T-cell (primary cell): ENCODE measurements at regions of chr18 and their contacts with region 1.

Region 1: GRCh38 chr18:74316259-74317170 is 876 bp downstream of the C18orf63 start:
- DNase-seq: no peak
- ATAC-seq: no peak
- H3K4me3 ChIP-seq: no peak overlapping the region
- H3K4me3 Mint-ChIP-seq: no peak overlapping the region
- H3K27ac ChIP-seq: no peak overlapping the region
- H3K27ac Mint-ChIP-seq: no peak overlapping the region
- H3K4me1 ChIP-seq: no peaks in the 10 kb centered on the region
- H3K4me1 Mint-ChIP-seq: no peaks in the 10 kb centered on the region
- H3K27me3 ChIP-seq: peaks cover 0 to 17% of the 10 kb centered on the region in 2 experiments
- H3K27me3 Mint-ChIP-seq: peaks cover 5 to 11% of the 10 kb centered on the region in 2 donors

Region 2: DNA sequence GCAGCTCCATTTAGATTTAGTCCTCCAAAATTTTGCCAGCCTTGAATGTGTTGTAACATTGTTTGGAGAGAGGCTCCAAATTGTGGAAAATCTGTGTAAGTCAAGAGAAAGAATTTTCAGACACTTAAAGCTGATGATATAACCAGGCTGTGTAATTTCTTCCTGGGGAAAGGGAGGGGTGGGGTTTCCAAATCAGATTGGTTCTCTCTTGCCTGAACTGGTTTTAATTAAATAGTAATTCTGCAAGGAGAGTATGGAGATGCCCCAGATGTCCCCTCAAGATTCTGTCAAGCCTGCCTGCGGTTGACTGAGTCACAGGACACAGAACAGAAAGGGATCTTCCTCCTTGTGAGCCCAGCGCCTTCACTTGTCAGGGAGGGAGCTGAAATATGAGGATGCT is 53.6 kb after region 1 on chr18:
- CTCF ChIA-PET with region 1: no interaction called
- POLR2A ChIA-PET with region 1: interaction called in 1 of 2 experiments, 11 read pairs
- DNase-seq: no peak
- ATAC-seq: no peak
- H3K4me3 ChIP-seq: no peak overlapping the region
- H3K4me3 Mint-ChIP-seq: peak overlapping the region in 1 of 3 donors; percentile 10
- H3K27ac ChIP-seq: no peak overlapping the region
- H3K27ac Mint-ChIP-seq: no peak overlapping the region
- H3K4me1 ChIP-seq: peaks cover 38% of the 10 kb centered on the region in 2 experiments
- H3K4me1 Mint-ChIP-seq: peaks cover 48 to 52% (median 50%) of the 10 kb centered on the region in 3 donors
- H3K27me3 ChIP-seq: no peaks in the 10 kb centered on the region
- H3K27me3 Mint-ChIP-seq: peaks cover 0 to 8% of the 10 kb centered on the region in 2 donors